Gastrocnemius medialis (tissue), 4 donors: ENCODE measurements at regions of chr10 and their contacts with region 1.

Region 1: GRCh38 chr10:110803830-110804338 is 67.8 kb upstream of the PDCD4 start:
- DNase-seq: no peak
- ATAC-seq: peak; percentile 41 to 54
- H3K4me3 ChIP-seq: no peak overlapping the region
- H3K27ac ChIP-seq: no peak overlapping the region
- H3K4me1 ChIP-seq: peaks cover 3 to 9% of the 10 kb centered on the region in 2 donors
- H3K27me3 ChIP-seq: no peaks in the 10 kb centered on the region
- CTCF ChIP-seq: peak; percentile 36 to 60 (median 49)
- POLR2A ChIP-seq: no peak

Region 2: GRCh38 chr10:110883924-110884323 is 80.0 kb after region 1 on chr10:
- in situ Hi-C with region 1: loop called in 3 of 4 experiments (anchors 5 to 10 kb)
- intact Hi-C with region 1: no loop called
- DNase-seq: no peak
- ATAC-seq: no peak
- H3K4me3 ChIP-seq: no peak overlapping the region
- H3K27ac ChIP-seq: no peak overlapping the region
- H3K4me1 ChIP-seq: peaks cover 0 to 7% of the 10 kb centered on the region in 2 donors
- H3K27me3 ChIP-seq: no peaks in the 10 kb centered on the region
- CTCF ChIP-seq: no peak
- POLR2A ChIP-seq: no peak

Region 3: DNA sequence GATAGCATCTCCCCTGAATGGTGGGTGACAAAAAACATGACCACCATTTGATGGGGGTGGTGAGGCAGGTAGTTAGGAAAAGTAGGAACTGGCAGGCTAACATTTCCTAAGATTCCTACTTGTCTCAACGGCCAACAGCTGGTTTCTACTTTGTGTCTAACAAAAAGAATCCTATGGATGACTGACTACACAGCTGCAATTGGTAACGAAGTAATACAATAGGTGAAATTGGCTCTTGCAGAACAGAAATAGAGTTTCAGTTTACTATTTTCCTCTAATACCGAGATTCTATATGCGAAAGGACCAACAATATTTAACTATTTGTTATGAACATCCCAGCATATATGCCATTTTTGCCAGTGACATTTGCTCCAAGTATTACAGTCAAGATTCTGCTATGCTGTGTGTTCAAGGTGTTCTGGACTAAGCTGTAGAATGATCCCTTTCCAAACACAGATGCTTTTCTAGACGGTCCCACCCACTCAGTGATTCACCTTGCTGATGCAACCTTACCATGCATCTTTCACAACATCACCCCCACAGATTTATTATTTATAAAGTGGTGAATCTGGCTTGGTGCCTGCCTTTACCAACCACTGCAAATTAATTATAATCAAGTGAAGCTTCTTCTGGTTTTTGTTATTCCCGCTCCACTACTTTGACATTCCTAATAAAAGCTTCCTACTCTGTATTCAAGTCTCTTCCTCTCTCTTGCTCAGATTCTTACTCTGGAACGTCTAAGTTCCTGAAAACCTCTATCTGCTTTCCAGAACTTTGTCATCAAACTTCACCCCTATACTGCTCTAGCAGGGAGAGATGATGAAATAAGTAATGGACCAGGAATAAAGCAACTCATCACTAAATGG is 98.3 kb after region 1 on chr10:
- in situ Hi-C with region 1: loop called in 2 of 4 experiments (anchors 5 to 10 kb)
- intact Hi-C with region 1: no loop called
- DNase-seq: no peak
- ATAC-seq: no peak
- H3K4me3 ChIP-seq: no peak overlapping the region
- H3K27ac ChIP-seq: no peak overlapping the region
- H3K4me1 ChIP-seq: no peaks in the 10 kb centered on the region
- H3K27me3 ChIP-seq: no peaks in the 10 kb centered on the region
- CTCF ChIP-seq: no peak
- POLR2A ChIP-seq: no peak

Region 4: DNA sequence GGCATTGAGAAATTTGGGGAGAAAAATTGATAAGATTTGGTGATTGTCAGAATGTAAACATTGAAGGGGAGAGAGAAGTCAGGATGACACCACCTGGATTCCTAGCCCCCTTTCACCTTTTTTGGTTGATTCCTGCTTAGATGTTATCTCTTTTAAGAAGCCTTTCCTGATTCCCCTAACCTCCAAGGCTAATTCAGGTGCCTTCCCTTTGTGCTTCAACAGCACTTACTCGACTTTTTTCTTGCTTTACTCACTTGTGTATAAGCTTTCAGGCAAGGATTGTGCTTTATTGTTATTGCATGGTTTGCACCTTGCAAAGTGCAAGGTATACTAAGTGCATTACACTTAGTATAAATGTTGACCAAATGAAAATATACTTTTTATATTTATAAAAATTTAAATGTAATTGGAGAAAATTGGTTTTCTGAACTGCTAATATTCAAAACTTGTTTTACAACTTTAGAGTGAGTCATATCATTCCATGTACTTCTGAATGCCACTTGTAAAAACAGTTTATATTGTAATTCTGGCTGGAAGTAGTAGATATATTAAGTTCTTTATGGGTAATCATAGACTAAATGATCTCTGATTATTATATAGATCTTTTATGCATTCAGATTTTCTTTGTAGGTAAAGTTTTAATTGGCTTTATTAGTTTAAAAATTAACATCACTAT is 128.8 kb after region 1 on chr10:
- in situ Hi-C with region 1: no loop called
- intact Hi-C with region 1: no loop called
- DNase-seq: no peak
- ATAC-seq: no peak
- H3K4me3 ChIP-seq: no peak overlapping the region
- H3K27ac ChIP-seq: no peak overlapping the region
- H3K4me1 ChIP-seq: peaks cover 11 to 14% of the 10 kb centered on the region in 2 donors
- H3K27me3 ChIP-seq: no peaks in the 10 kb centered on the region
- CTCF ChIP-seq: no peak
- POLR2A ChIP-seq: no peak